Left ventricle myocardium inferior (tissue), 1 donor: ENCODE measurements at regions of chr16 and their contacts with region 1.

Region 1: GRCh38 chr16:56866943-56867830 is 2.2 kb downstream of the SLC12A3 start:
- DNase-seq: no peak
- H3K4me3 ChIP-seq: no peak overlapping the region
- H3K27ac ChIP-seq: no peak overlapping the region
- H3K4me1 ChIP-seq: peaks cover 9% of the 10 kb centered on the region
- H3K27me3 ChIP-seq: no peaks in the 10 kb centered on the region
- CTCF ChIP-seq: peak; percentile 87

Region 2: GRCh38 chr16:56944954-56945839 is 78.0 kb after region 1 on chr16:
- intact Hi-C with region 1: loop called (anchors 10 kb)
- DNase-seq: no peak
- H3K4me3 ChIP-seq: no peak overlapping the region
- H3K27ac ChIP-seq: no peak overlapping the region
- H3K4me1 ChIP-seq: peaks cover 9% of the 10 kb centered on the region
- H3K27me3 ChIP-seq: no peaks in the 10 kb centered on the region
- CTCF ChIP-seq: no peak

Region 3: DNA sequence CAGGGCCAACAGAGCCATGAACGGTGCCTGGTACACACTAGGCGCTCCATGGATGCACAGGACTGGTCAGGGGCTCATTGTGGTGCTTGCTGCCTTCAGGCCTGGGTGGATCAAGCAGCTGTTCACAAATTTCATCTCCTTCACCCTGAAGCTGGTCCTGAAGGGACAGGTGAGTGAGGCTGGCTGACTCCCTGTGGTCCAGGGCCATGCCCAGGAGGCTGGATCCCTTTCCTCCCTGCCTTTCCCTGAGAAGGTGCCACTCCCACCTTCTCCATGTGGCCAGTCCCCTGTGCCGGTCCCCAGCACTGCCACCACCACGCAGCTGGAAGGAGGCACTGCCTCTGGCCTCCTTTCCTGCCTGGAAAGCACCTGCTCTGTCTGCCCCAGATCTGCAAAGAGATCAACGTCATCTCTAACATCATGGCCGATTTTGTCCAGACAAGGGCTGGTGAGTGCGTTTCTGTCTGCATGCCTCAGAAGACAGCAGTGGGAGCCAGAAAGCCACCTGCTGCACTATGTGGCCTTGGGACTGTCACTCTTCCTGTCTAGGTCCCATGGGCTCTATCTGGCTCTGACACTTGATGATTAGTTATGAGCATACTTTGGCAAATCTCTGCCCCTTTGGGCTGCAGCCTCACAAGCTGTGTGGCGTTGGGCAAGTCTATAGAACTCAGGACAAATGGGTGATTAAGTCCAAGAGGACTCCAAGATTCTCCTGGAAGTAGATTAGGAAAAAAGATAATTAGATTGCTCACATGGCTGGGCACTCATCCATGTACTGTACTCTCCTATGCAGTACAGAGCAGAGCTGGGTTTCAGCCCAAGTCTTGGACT is 104.0 kb after region 1 on chr16:
- intact Hi-C with region 1: no loop called
- DNase-seq: no peak
- H3K4me3 ChIP-seq: no peak overlapping the region
- H3K27ac ChIP-seq: no peak overlapping the region
- H3K4me1 ChIP-seq: peaks cover 10% of the 10 kb centered on the region
- H3K27me3 ChIP-seq: no peaks in the 10 kb centered on the region
- CTCF ChIP-seq: no peak

Region 4: DNA sequence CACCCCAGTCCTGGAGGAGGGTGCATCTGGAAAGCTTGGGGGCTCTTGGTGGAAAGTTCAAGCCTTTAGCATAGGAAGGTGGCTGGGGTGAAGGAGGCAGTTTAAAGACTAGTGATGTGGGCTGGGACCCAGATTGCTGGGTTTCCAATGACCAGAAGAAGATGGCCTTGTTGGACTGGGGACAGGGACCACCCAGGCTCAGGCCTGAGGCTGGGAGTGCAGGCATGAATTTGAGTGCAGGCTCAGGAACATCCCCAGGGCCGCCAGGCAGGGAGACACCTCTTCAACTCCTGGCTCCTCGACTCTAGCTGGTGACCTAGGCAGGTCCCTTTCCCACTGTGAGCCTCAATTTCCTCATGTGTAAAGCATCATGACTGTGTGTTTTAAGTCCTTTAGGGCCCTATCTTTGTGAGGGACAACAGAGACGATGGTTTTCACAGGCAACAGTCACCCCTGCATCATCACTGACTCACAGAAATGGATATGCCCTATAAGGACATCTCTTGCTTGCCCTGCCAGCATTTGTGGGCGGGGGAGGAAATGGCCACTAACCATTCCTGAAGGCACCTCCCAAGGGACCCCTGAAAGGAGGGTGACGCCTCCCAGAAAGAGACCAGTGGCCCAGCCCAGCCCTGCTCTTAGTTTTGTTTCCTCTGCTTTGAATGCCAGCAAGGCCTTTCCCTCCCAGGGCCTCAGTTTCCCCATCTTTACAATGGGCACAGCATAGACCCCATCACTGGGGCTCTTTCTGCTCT is 133.3 kb after region 1 on chr16:
- intact Hi-C with region 1: no loop called
- DNase-seq: peak; percentile 61
- H3K4me3 ChIP-seq: no peak overlapping the region
- H3K27ac ChIP-seq: peak overlapping the region; percentile 87
- H3K4me1 ChIP-seq: peaks cover 41% of the 10 kb centered on the region
- H3K27me3 ChIP-seq: no peaks in the 10 kb centered on the region
- CTCF ChIP-seq: no peak

Region 5: DNA sequence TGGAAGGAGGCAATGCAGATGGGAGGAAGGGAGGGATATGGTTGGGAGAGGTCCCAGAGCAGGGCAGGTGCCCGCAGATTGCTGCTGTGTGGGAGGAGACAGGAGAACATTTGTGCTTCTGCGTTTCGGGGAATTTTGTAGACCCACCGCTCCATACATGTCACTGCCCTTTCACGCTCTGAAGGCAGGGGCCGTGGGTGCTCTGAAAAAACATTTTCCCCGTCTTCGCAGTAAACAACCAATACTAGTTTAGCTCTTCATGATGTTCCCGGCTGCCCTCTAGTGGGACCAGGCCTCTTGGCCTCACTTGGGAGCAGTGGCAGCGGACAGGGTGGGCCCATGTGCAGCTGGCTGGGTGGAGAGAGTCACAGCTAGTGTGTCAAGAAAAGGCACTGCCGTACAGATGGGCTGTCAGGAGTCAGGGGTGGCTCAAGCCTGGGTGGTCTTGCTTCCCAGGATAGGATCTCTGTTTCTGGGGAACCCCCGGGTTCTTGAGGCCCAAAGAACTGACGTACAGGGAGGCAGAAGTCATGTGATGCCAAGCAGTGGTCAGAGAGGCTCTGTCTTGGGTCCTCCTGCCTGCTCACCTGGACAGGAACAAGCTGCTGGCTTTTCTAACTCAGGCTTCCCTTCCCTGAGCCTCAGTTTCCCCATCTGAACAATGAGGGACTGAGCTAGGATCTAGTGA is 178.7 kb after region 1 on chr16:
- intact Hi-C with region 1: loop called (anchors 10 kb)
- DNase-seq: peak; percentile 74
- H3K4me3 ChIP-seq: peak overlapping the region; percentile 22
- H3K27ac ChIP-seq: peak overlapping the region; percentile 2
- H3K4me1 ChIP-seq: peaks cover 29% of the 10 kb centered on the region
- H3K27me3 ChIP-seq: no peaks in the 10 kb centered on the region
- CTCF ChIP-seq: peak; percentile 77